AG04449 (cell line): ENCODE measurements at regions of chr14 and their contacts with region 1.

Region 1: GRCh38 chr14:50860478-50861086 is 11.3 kb upstream of the ABHD12B start:
- DNase-seq: no peak
- H3K4me3 ChIP-seq: peak overlapping the region; percentile 57
- CTCF ChIP-seq: peak; percentile 65

Region 2: DNA sequence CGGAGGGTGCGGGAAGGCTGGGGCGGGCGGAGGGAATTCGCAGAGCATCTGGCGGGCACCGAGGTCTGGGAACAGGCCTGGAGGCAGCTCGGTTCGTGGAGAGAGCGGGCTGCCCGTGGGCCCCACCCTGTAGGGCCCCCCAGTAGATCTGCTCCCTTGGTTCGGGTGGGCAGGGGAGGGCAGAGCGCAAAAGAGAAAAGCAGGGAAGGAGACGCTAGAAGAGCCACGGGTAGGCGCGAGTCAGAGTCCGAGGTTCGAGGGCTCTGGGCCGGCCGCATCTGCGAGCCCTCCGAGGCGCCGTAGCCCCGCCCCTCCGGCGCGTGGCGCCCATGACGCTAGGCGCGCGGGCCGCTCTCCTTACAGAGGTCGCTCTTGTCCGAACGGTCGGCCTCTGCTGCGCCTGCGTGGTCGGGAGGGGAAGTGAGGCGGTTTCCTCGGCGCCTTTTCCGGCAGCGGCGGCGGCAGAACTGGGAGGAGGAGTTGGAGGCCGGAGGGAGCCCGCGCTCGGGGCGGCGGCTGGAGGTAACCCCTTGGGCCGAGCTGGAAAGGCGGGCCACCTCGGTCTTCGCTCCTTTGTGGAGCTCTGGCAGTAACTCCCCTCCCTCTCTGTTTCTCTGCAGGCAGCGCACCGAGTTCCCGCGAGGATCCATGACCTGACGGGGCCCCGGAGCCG is 967.8 kb before region 1 on chr14 and contains the start of gene ARF6:
- CTCF ChIA-PET with region 1: no interaction called
- POLR2A ChIA-PET with region 1: no interaction called
- DNase-seq: peak; percentile 77
- H3K4me3 ChIP-seq: peak within 1 kb of the TSS; percentile 80
- CTCF ChIP-seq: peak; percentile 15

Region 3: GRCh38 chr14:50559990-50560930 is 300.3 kb before region 1 on chr14 and contains the start of gene ATL1:
- CTCF ChIA-PET with region 1: interaction called, 11 read pairs
- POLR2A ChIA-PET with region 1: no interaction called
- DNase-seq: peak; percentile 1
- H3K4me3 ChIP-seq: peak within 1 kb of the TSS; percentile 67
- CTCF ChIP-seq: no peak

Region 4: GRCh38 chr14:50607181-50607580 is 253.4 kb before region 1 on chr14:
- CTCF ChIA-PET with region 1: interaction called, 40 read pairs
- POLR2A ChIA-PET with region 1: no interaction called
- DNase-seq: peak; percentile 65
- H3K4me3 ChIP-seq: no peak overlapping the region
- CTCF ChIP-seq: no peak

Region 5: GRCh38 chr14:50830932-50831725 is 29.5 kb before region 1 on chr14 and contains the start of gene NIN:
- CTCF ChIA-PET with region 1: interaction called, 30 read pairs
- POLR2A ChIA-PET with region 1: no interaction called
- DNase-seq: no peak
- H3K4me3 ChIP-seq: peak within 1 kb of the TSS; percentile 74
- CTCF ChIP-seq: no peak

Region 6: GRCh38 chr14:50875359-50876070 is 14.9 kb after region 1 on chr14:
- CTCF ChIA-PET with region 1: interaction called, 70 read pairs
- POLR2A ChIA-PET with region 1: no interaction called
- DNase-seq: no peak
- H3K4me3 ChIP-seq: no peak overlapping the region
- CTCF ChIP-seq: no peak

Region 7: DNA sequence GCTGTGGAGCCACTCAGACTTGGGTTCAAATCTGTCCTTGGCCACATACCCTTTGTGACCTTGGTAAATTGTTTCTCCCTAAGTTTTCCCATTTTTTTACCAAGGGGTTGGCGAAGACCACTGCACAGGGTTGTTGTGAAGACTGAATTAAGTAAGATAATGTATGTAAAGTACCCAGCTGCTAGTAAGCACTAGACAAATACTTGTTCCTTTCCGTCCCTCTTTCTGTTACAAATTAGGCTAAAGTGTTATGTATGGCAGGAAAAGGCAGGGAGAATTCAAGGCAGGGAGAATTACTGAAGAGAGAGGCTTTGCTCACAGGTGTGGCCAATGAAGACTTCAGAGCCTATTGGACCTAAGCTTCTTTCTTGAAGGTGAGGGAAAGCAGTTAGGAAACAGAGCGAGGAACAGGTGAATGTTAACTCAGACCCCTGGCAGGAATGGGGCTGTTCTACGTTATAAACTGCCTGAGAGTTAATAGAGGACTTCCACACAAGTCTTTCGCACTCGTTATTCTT is 37.1 kb after region 1 on chr14:
- CTCF ChIA-PET with region 1: no interaction called
- POLR2A ChIA-PET with region 1: no interaction called
- DNase-seq: no peak
- H3K4me3 ChIP-seq: no peak overlapping the region
- CTCF ChIP-seq: no peak